IMR-90 (cell line): ENCODE measurements at regions of chr15 and their contacts with region 1.

Region 1: GRCh38 chr15:67833710-67834511 is 5.9 kb downstream of the RNU6-1 start:
- DNase-seq: no peak
- ATAC-seq: peak; percentile 69
- H3K4me3 ChIP-seq: peak overlapping the region; percentile 17; the same call in 1 of the 2 replicates
- H3K27ac ChIP-seq: no peak overlapping the region
- H3K4me1 ChIP-seq: no peaks in the 10 kb centered on the region
- H3K27me3 ChIP-seq: peaks cover 82% of the 10 kb centered on the region
- CTCF ChIP-seq: peak; percentile 55
- POLR2A ChIP-seq: no peak
- RAD21 ChIP-seq: peak; percentile 62

Region 2: DNA sequence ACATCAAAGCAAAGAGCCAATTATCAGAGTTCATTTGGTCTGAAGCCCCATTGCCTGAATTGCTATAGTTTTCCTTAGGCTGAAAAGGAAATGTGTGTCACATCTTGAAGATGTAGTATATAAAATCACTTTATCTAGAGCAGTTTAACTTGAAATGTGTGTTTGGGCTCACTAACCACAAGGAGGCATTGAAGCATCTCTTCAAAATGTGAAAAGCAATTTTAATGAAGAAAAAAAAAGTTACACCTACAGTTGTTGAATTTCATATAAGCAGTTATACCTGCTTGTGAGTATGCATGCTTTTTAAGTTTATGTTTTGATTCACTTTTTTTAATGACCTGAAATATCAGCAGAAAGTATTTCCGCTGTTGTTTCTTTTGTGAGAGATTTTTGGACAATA is 450.0 kb before region 1 on chr15:
- CTCF ChIA-PET with region 1: no interaction called
- POLR2A ChIA-PET with region 1: no interaction called
- dilution Hi-C with region 1: no loop called
- in situ Hi-C with region 1: no loop called
- intact Hi-C with region 1: loop called (anchors 2 kb)
- DNase-seq: peak; percentile 19
- ATAC-seq: no peak
- H3K4me3 ChIP-seq: no peak overlapping the region
- H3K27ac ChIP-seq: no peak overlapping the region
- H3K4me1 ChIP-seq: no peaks in the 10 kb centered on the region
- H3K27me3 ChIP-seq: peaks cover 22% of the 10 kb centered on the region
- CTCF ChIP-seq: peak; percentile 42
- POLR2A ChIP-seq: no peak
- RAD21 ChIP-seq: peak; percentile 37

Region 3: DNA sequence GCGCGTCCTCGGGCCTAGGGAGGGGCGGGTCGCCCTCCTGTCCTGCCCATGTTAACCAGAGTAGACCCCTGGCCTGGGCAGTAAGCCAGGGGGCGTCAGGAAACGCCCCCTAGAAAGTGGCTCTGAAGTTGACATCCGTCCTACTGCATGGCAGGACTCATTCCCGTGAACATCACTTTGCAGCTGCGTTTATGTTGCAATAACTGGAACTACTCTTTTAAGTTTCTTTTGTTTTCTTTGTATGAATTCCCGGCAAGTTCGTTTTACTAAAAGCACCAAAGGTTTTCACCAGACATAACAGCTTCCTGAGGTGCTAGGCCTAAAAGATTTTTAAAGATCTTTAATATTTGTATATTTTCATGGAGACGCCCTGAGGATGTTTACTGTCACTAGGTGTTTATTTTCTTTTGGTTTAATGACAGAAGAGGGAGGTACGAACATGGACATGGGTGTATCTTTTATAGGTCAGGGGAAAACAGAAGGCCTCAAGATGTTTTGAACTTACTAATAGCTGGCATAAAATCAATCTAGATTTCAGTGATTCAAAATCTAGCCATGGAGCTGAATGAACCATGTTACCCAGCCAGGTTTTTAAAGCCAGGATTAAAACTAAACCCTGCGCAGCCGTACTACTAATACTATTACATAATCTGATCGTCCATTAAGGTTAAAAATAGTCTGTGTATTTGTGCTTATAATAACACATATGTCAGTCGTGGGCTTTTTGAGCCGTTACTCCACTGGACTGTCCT is 311.9 kb before region 1 on chr15:
- CTCF ChIA-PET with region 1: no interaction called
- POLR2A ChIA-PET with region 1: no interaction called
- dilution Hi-C with region 1: no loop called
- in situ Hi-C with region 1: no loop called
- intact Hi-C with region 1: loop called (anchors 1 kb)
- DNase-seq: peak; percentile 51
- ATAC-seq: peak; percentile 4
- H3K4me3 ChIP-seq: peak overlapping the region; percentile 79
- H3K27ac ChIP-seq: peak overlapping the region; percentile 94
- H3K4me1 ChIP-seq: no peaks in the 10 kb centered on the region
- H3K27me3 ChIP-seq: no peaks in the 10 kb centered on the region
- CTCF ChIP-seq: no peak
- POLR2A ChIP-seq: no peak
- RAD21 ChIP-seq: no peak

Region 4: GRCh38 chr15:67542420-67543347 is 291.2 kb before region 1 on chr15 and contains the start of gene MAP2K5:
- CTCF ChIA-PET with region 1: no interaction called
- POLR2A ChIA-PET with region 1: no interaction called
- dilution Hi-C with region 1: no loop called
- in situ Hi-C with region 1: no loop called
- intact Hi-C with region 1: loop called (anchors 5 kb)
- DNase-seq: peak; percentile 57
- ATAC-seq: peak; percentile 97
- H3K4me3 ChIP-seq: peak within 1 kb of the TSS; percentile 88
- H3K27ac ChIP-seq: peak within 1 kb of the TSS; percentile 71
- H3K4me1 ChIP-seq: peaks cover 9% of the 10 kb centered on the region
- H3K27me3 ChIP-seq: no peaks in the 10 kb centered on the region
- CTCF ChIP-seq: no peak
- POLR2A ChIP-seq: no peak
- RAD21 ChIP-seq: no peak
- total RNA-seq, gene MAP2K5: 1.6 and 2.8 TPM in 2 replicates